ENCODE measurements at regions of chr7 and their contacts with region 1.

Region 1: DNA sequence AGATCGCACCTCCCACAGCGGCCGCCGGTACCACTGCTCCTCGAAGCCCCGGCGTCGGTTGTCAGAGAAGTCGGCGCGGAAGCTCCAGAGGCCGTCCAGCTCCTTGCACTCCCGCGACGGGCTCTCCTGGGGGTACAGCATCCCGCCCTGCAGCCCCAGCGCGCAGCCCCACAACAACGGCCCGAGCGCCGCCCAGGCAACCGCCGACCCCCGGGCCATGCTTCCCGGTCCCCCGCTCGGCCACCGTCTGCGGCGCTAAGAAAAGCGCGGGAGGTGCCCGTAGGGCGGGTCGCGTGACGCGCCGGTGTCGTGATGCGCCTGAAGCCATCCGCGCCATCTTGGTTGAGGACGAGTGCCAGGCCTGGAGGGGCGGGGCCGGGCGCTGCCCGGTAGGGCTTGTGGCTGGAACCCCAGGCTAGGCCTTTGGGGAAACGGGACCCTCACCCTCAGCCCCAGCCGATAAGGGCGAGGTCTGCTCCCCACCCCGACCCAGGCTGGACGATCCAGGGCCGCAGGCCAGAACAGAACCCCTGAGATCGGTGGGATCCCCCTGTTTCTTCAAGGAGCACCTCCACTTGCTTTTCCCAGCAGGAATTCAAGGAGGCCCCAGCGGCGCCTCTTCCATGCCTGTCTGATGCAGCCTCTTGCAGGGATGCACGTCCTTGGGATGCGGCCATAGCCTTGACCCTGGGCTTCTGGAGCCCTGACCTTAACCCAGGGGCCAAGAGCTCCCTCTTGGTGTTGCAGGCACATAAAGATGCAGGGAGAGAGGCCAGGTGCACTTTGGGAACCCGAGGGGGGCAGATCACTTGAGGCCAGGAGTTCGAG is at the start of gene GUSB:
- DNase-seq: peak; percentile 91 to 97 (median 92)
- H3K4me3 ChIP-seq: peak within 1 kb of the TSS; percentile 66 to 100 (median 94)
- H3K27ac ChIP-seq: peak within 1 kb of the TSS in 58 of 59 donors; percentile 43 to 97 (median 90)
- H3K27me3 ChIP-seq: no peaks in the 10 kb centered on the region
- CTCF ChIP-seq: peak in 25 of 56 donors; percentile 6 to 49 (median 21)
- total RNA-seq, gene GUSB: 16.7 to 43.9 (median 26.7) TPM

Region 2: DNA sequence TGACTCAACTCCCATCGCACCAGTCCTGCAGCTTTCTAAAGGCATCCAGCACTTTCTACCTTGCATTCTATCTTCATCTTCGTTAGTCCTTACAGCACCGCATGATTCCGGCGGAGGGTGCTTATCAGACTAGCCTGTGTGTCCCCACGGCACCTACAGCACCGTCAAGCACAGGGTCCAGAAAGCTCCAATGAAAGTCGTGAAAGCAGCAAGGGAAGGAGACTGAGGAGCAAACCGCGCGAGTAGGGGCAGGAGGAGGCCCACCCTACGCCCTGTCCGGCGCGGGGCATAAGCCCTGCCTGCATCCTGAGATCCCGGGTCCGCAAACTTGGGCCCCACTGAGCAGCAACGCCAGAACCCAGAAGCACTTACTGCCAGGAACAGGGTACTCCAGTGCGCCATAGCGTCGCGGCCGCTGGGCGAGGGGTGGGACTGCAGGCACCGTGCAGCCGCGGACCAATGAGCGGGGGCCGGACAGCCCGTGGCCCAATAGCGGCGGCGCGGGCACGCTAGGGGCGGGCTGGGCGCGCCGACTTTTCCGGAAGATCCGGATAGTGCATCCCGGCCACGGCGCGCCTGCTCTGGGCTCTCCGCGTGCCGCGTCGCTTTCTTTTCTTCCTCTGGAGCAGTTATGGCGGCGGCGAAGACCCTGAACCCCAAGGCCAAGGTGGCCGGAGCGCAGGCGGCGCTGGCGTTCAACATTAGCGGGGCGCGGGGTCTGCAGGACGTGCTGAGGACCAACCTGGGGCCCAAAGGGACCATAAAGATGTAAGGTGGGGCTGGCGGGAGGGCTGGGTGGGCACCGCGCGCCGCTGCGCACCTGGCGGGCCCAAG is 231.5 kb before region 1 on chr7:
- intact Hi-C with region 1: loop called (anchors 5 to 10 kb)
- DNase-seq: peak; percentile 85 to 97 (median 92)
- H3K4me3 ChIP-seq: peak overlapping the region; percentile 62 to 99 (median 92)
- H3K27ac ChIP-seq: peak overlapping the region in 58 of 59 donors; percentile 36 to 92 (median 85)
- H3K27me3 ChIP-seq: no peaks in the 10 kb centered on the region
- CTCF ChIP-seq: peak in 49 of 56 donors; percentile 8 to 63 (median 39)

Region 3: GRCh38 chr7:65872776-65873581 is 109.2 kb before region 1 on chr7 and contains the start of gene VKORC1L1:
- intact Hi-C with region 1: loop called (anchors 10 kb)
- DNase-seq: peak; percentile 80 to 95 (median 89)
- H3K4me3 ChIP-seq: peak within 1 kb of the TSS; percentile 45 to 90 (median 75)
- H3K27ac ChIP-seq: peak within 1 kb of the TSS in 20 of 59 donors; percentile 5 to 89 (median 62)
- H3K27me3 ChIP-seq: no peaks in the 10 kb centered on the region
- CTCF ChIP-seq: peak in 2 of 56 donors; percentile 10 to 11
- total RNA-seq, gene VKORC1L1: 16.1 to 36.9 (median 26.5) TPM

Region 4: GRCh38 chr7:66075590-66076461 is 93.6 kb after region 1 on chr7 and contains the start of gene ASL:
- intact Hi-C with region 1: loop called (anchors 10 kb)
- DNase-seq: peak; percentile 88 to 99 (median 94)
- H3K4me3 ChIP-seq: peak within 1 kb of the TSS; percentile 49 to 100 (median 89)
- H3K27ac ChIP-seq: peak within 1 kb of the TSS in 45 of 59 donors; percentile 9 to 88 (median 63)
- H3K27me3 ChIP-seq: no peaks in the 10 kb centered on the region
- CTCF ChIP-seq: peak in 18 of 56 donors; percentile 4 to 46 (median 18)
- total RNA-seq, gene ASL: 12.3 to 38.5 (median 20.3) TPM

Region 5: GRCh38 chr7:66099616-66100474 is 117.7 kb after region 1 on chr7:
- intact Hi-C with region 1: no loop called
- DNase-seq: peak in 8 of 10 donors; percentile 41 to 77 (median 67)
- H3K4me3 ChIP-seq: peak overlapping the region in 58 of 59 donors; percentile 14 to 61 (median 44)
- H3K27ac ChIP-seq: peak overlapping the region in 55 of 59 donors; percentile 27 to 91 (median 75)
- H3K27me3 ChIP-seq: no peaks in the 10 kb centered on the region
- CTCF ChIP-seq: no peak

Region 6: GRCh38 chr7:66542528-66543269 is 560.5 kb after region 1 on chr7:
- intact Hi-C with region 1: no loop called
- DNase-seq: no peak
- H3K4me3 ChIP-seq: no peak overlapping the region
- H3K27ac ChIP-seq: peak overlapping the region in 11 of 59 donors; percentile 8 to 56 (median 35)
- H3K27me3 ChIP-seq: no peaks in the 10 kb centered on the region
- CTCF ChIP-seq: no peak

Measured in dorsolateral prefrontal cortex (tissue), 120 donors.